PC-9 (cell line): ENCODE measurements at regions of chr12 and their contacts with region 1.

Region 1: GRCh38 chr12:123126186-123127006 is 24.5 kb downstream of the PITPNM2 start:
- DNase-seq: peak; percentile 84 to 91
- H3K4me3 ChIP-seq: peak overlapping the region; percentile 16; the same call in 1 of the 2 replicates
- H3K27ac ChIP-seq: peak overlapping the region; percentile 91
- H3K4me1 ChIP-seq: peaks cover 62% of the 10 kb centered on the region
- H3K27me3 ChIP-seq: no peaks in the 10 kb centered on the region
- CTCF ChIP-seq: no peak; the same call in 1 of the 2 replicates

Region 2: GRCh38 chr12:122148657-122149056 is 977.7 kb before region 1 on chr12:
- CTCF ChIA-PET with region 1: no interaction called
- POLR2A ChIA-PET with region 1: no interaction called
- intact Hi-C with region 1: no loop called
- DNase-seq: no peak
- H3K4me3 ChIP-seq: no peak overlapping the region
- H3K27ac ChIP-seq: no peak overlapping the region
- H3K4me1 ChIP-seq: no peaks in the 10 kb centered on the region
- H3K27me3 ChIP-seq: no peaks in the 10 kb centered on the region
- CTCF ChIP-seq: no peak

Region 3: DNA sequence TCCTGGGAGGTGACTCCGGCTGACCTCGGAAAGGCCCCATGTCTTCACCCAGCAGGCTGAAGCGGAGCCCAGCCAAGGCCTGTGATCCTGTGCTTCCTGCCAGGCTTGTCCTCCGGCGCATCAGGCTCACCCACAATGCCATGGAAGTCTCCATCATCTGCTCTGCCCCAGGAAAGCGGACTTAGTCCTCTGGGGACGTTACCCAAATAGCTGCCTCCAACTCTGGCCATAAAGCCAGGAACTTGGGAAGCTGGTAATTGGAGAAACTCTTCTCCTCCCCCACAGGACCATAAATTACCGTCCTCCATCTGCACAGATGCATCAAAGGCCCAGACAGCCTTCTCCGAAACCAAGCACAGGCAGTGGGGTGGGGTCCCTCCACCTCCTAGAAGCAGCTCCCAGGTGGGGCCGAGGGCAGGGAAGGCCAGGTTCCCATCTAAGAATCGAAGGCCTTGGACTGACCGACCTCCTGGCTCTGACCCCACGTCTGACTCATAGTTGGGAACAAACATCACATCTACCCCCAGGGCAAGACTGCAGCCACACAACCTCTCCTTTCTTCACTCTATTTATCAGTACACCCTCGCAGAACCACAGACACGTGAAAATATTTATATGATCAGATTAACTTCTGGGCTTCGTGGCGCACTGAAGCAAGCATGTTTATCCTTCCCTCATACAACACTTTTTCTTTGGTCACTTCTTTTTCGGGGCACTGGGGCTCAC is 31.9 kb before region 1 on chr12:
- CTCF ChIA-PET with region 1: no interaction called
- POLR2A ChIA-PET with region 1: interaction called, 8 read pairs
- intact Hi-C with region 1: loop called (anchors 2 kb)
- DNase-seq: peak; percentile 88 to 92
- H3K4me3 ChIP-seq: no peak overlapping the region
- H3K27ac ChIP-seq: peak overlapping the region; percentile 48
- H3K4me1 ChIP-seq: peaks cover 66% of the 10 kb centered on the region
- H3K27me3 ChIP-seq: no peaks in the 10 kb centered on the region
- CTCF ChIP-seq: no peak

Region 4: GRCh38 chr12:123106628-123107359 is 19.6 kb before region 1 on chr12:
- CTCF ChIA-PET with region 1: no interaction called
- POLR2A ChIA-PET with region 1: no interaction called
- intact Hi-C with region 1: loop called (anchors 2 kb)
- DNase-seq: peak in 1 of 2 experiments; percentile 50
- H3K4me3 ChIP-seq: no peak overlapping the region
- H3K27ac ChIP-seq: no peak overlapping the region
- H3K4me1 ChIP-seq: peaks cover 49% of the 10 kb centered on the region
- H3K27me3 ChIP-seq: no peaks in the 10 kb centered on the region
- CTCF ChIP-seq: no peak

Region 5: GRCh38 chr12:123141615-123142517 is 15.5 kb after region 1 on chr12:
- CTCF ChIA-PET with region 1: no interaction called
- POLR2A ChIA-PET with region 1: interaction called, 5 read pairs
- intact Hi-C with region 1: loop called (anchors 2 kb)
- DNase-seq: peak; percentile 48 to 75
- H3K4me3 ChIP-seq: peak overlapping the region; percentile 31; the same call in 1 of the 2 replicates
- H3K27ac ChIP-seq: peak overlapping the region; percentile 81
- H3K4me1 ChIP-seq: peaks cover 45% of the 10 kb centered on the region
- H3K27me3 ChIP-seq: no peaks in the 10 kb centered on the region
- CTCF ChIP-seq: no peak

Region 6: DNA sequence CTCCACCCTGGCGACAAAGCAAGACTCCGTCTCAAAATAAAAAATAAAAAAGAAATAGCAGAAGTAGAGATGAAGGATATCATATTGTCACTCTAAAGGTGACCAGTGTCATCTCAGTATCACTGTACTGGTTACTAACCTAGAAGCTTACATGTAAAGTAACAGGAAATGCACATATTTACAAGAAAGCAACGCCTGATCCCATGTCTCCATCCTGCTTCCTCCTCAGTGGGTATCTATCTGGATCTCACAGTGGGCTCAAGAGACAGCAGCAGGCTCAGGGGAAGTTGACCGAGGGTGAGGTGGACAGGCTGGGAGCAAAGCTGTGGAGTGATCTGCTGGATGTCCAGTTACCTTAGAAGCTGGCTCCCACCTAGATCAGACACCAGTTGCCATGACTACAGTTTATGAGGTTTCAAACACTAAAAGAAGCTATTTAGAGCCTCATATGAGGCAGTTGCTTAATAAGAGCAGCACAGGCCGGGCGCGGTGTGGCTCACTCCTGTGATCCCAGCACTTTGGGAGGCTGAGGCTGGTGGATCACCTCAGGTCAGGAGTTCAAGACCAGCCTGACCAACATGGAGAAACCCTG is 117.4 kb after region 1 on chr12:
- CTCF ChIA-PET with region 1: no interaction called
- POLR2A ChIA-PET with region 1: interaction called, 14 read pairs
- intact Hi-C with region 1: no loop called
- DNase-seq: no peak
- H3K4me3 ChIP-seq: no peak overlapping the region
- H3K27ac ChIP-seq: no peak overlapping the region
- H3K4me1 ChIP-seq: no peaks in the 10 kb centered on the region
- H3K27me3 ChIP-seq: no peaks in the 10 kb centered on the region
- CTCF ChIP-seq: no peak